ENCODE measurements at regions of chr1 and their contacts with region 1.

Region 1: GRCh38 chr1:158002022-158002630 is 8.7 kb downstream of the KIRREL1 start:
- DNase-seq: peak; percentile 57
- H3K4me3 Mint-ChIP-seq: no peak overlapping the region
- H3K27ac Mint-ChIP-seq: peak overlapping the region; percentile 79
- H3K4me1 Mint-ChIP-seq: peaks cover 79% of the 10 kb centered on the region
- H3K27me3 Mint-ChIP-seq: no peaks in the 10 kb centered on the region
- CTCF ChIP-seq: no peak

Region 2: DNA sequence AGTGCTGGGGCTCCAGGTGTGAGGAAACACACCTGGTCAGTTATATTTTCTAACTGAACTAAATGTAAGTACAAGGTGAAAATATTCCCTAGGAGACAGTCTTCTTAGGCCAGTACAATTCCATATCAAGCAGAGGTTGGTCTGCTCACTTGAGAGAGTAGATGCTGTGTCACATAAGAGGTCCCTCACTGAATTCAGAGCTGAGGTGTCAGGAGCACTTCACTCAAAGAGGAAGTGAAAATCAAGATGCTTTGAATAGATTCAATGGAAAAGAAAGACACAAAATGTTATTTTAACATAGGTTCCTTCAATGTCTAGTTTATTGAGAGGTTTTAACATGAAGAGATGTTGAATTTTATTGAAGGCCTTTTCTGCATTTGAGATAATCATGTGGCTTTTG is 297.2 kb before region 1 on chr1:
- CTCF ChIA-PET with region 1: no interaction called
- POLR2A ChIA-PET with region 1: no interaction called
- intact Hi-C with region 1: no loop called
- DNase-seq: no peak
- H3K4me3 Mint-ChIP-seq: no peak overlapping the region
- H3K27ac Mint-ChIP-seq: no peak overlapping the region
- H3K4me1 Mint-ChIP-seq: no peaks in the 10 kb centered on the region
- H3K27me3 Mint-ChIP-seq: peaks cover 65% of the 10 kb centered on the region
- CTCF ChIP-seq: no peak

Region 3: GRCh38 chr1:158019171-158019868 is 17.2 kb after region 1 on chr1:
- CTCF ChIA-PET with region 1: interaction called, 494 read pairs
- POLR2A ChIA-PET with region 1: interaction called, 245 read pairs
- intact Hi-C with region 1: no loop called
- DNase-seq: peak; percentile 92
- H3K4me3 Mint-ChIP-seq: peak overlapping the region; percentile 20
- H3K27ac Mint-ChIP-seq: peak overlapping the region; percentile 86
- H3K4me1 Mint-ChIP-seq: peaks cover 74% of the 10 kb centered on the region
- H3K27me3 Mint-ChIP-seq: no peaks in the 10 kb centered on the region
- CTCF ChIP-seq: no peak